Activated CD8-positive, alpha-beta T cell treated with anti-CD3 and anti-CD28 coated beads, Interleukin-2, amount 10 ng/mL, durations not matched to agents 7 days and 5 days (primary cell): ENCODE measurements at regions of chr12 and their contacts with region 1.

Region 1: DNA sequence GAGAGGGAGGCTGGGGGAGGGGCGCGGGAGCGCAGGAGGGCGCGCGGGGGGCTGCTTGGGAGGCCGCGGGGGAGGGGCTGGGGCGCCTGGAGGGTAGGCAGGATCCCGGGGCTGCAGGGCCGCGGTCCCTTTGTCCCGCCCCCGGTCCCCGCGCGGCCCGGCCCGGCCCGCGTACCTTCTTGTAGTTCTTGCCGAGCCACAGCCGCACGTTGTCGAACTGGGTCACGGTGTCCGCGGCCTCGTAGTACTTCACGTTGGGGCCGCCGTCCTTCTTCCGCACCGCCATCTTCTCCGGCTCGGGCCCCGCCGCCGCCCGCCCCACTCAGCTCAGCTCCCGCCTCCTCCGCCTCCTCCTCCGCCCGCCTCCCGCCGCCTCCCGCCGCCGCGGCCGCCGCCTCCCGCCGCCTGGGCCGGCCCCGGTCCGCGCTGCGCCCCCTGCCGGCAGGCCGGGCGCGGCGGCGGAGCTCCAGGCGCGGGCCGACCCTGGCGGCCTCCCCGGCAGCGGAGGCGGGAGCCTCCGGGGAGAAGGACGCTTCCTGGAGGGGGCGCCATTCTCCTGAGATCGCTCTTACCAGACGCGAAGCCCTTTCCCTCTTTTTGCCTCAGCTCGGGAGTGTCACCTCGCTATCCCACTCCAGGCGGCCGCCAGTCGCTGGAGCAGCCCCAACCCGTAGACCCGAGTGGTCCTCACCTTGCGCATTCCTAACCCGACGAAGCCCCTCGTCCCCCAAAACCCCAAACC is at the start of gene SMARCC2:
- DNase-seq: peak; percentile 90
- ATAC-seq: peak; percentile 90
- H3K4me3 Mint-ChIP-seq: peak within 1 kb of the TSS; percentile 93
- H3K27ac Mint-ChIP-seq: peak within 1 kb of the TSS; percentile 93
- H3K4me1 Mint-ChIP-seq: peaks cover 52% of the 10 kb centered on the region
- H3K27me3 Mint-ChIP-seq: no peaks in the 10 kb centered on the region
- total RNA-seq, gene SMARCC2: 144 to 154 TPM

Region 2: DNA sequence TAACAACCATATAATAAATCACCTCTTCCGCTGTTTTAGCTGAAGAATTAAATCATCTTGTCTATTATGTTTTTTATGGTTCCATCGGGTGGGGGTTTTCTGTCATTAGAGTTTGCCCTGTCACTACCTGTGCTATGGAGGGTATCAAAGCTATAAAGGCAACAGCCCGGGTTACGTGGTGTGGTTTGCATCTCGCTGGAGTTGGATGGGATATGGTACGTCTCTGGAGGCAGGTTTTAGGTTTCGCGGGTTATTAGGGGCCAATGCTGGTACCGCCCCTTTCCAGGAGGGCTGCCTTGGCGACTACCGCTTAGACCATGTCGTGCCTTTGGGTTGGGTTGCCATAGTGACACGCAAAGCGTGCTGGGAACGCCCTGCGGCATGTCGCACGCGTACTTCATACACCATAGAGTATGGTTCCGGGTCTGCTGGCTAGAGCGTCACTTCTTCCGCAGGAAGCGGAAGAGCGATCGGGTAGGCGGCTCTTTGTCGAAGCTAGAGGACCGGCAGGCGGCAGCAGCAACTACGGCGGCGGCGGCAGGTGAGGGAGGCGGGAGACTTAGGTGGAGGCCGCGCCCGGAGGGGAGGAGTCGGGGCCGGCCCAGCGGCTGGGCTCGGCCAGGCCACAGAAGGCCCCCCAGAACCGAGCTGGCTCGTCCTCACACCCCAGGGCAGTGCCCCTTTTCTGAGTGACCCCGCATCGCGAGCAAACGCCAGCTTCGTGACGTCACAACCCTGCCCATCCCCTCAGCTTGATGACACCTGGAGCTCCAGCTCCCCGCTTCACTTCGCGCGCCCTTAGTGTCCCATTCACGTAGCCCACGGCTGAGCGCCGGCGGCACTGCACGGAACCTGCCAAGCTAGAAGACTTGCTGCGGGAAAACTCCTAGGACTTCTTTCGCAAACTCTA is 71.3 kb before region 1 on chr12 and contains the start of gene ZC3H10:
- CTCF ChIA-PET with region 1: interaction called, 148 read pairs
- POLR2A ChIA-PET with region 1: interaction called, 36 read pairs
- DNase-seq: peak; percentile 100
- ATAC-seq: peak; percentile 76
- H3K4me3 Mint-ChIP-seq: peak within 1 kb of the TSS; percentile 100
- H3K27ac Mint-ChIP-seq: peak within 1 kb of the TSS; percentile 100
- H3K4me1 Mint-ChIP-seq: peaks cover 39% of the 10 kb centered on the region
- H3K27me3 Mint-ChIP-seq: no peaks in the 10 kb centered on the region
- total RNA-seq, gene ZC3H10: 9.1 to 10.6 TPM

Region 3: DNA sequence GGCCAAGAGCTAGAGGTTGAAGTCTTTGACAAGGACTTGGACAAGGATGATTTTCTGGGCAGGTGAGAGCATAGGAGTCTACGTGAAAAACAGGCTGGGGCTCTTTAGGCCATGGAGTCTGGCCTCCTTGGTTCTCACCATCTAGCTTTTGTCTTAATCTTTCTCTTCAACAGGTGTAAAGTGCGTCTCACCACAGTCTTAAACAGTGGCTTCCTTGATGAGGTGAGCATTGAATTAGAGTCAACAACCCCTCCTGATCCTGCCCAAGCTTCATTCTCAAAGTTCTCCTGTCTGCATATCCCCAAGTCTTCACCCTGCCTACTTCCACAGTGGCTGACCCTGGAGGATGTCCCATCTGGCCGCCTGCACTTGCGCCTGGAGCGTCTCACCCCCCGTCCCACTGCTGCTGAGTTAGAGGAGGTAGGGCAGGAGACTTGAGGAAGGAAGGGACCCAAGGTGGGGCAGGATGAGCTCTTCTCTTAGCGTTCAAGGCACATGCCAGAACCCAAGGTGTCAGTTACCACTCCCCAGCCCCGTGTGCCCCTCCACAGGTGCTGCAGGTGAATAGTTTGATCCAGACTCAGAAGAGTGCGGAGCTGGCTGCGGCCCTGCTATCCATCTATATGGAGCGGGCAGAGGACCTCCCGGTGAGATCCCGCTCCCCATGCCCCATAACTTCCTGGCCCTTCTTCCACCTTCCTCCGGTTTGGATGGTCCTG is 51.3 kb before region 1 on chr12:
- CTCF ChIA-PET with region 1: interaction called, 13 read pairs
- POLR2A ChIA-PET with region 1: interaction called, 3 read pairs
- DNase-seq: no peak
- ATAC-seq: peak; percentile 14
- H3K4me3 Mint-ChIP-seq: no peak overlapping the region
- H3K27ac Mint-ChIP-seq: peak overlapping the region; percentile 83
- H3K4me1 Mint-ChIP-seq: peaks cover 71% of the 10 kb centered on the region
- H3K27me3 Mint-ChIP-seq: no peaks in the 10 kb centered on the region

Region 4: DNA sequence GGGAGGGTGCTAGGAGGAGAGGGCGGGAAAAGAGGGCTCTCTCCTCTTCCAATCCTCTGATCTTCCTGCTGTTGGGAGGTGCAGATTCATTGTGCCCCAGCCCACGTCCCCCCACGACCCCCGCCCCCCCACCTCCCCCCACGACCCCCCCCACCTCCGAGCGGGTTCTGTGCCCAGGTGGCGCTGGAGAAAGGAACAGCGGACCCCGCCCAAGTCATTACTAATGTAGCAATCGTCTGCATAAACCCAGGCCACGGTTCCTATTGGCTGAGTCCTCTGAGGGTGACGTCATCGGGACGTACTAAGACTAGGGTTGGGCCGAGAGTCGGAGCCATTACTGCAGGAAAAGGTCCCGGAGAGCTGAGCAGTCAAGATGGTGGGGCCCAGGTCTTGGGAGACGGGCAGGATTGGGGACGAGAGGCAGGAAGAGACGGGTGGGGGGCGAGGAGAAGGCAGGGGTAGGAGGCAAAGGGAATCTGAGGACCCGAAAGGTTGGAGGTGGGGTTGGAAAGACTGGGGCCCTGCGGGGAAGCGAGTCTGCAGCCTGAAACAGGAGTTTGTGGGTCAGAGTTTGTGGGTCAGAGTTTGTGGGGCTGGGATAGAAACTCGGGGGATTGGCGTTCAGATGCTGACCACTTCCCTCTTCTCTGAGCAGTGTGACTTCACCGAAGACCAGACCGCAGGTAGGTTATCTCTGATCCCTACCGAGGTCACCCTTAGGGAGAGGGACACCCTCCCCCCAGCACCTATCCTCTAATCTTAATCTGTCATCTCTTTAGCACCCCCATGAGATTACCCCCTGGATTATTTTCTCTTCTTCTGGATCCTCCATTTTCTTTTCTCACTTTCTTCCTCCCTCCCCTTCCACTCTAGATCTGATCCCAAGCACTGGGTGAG is 31.1 kb before region 1 on chr12 and contains the start of gene MYL6:
- CTCF ChIA-PET with region 1: interaction called, 74 read pairs
- POLR2A ChIA-PET with region 1: interaction called, 50 read pairs
- DNase-seq: peak; percentile 97
- ATAC-seq: peak; percentile 83
- H3K4me3 Mint-ChIP-seq: peak within 1 kb of the TSS; percentile 90
- H3K27ac Mint-ChIP-seq: peak within 1 kb of the TSS; percentile 96
- H3K4me1 Mint-ChIP-seq: peaks cover 61% of the 10 kb centered on the region
- H3K27me3 Mint-ChIP-seq: no peaks in the 10 kb centered on the region
- total RNA-seq, gene MYL6: 1,527 to 1,542 TPM

Region 5: DNA sequence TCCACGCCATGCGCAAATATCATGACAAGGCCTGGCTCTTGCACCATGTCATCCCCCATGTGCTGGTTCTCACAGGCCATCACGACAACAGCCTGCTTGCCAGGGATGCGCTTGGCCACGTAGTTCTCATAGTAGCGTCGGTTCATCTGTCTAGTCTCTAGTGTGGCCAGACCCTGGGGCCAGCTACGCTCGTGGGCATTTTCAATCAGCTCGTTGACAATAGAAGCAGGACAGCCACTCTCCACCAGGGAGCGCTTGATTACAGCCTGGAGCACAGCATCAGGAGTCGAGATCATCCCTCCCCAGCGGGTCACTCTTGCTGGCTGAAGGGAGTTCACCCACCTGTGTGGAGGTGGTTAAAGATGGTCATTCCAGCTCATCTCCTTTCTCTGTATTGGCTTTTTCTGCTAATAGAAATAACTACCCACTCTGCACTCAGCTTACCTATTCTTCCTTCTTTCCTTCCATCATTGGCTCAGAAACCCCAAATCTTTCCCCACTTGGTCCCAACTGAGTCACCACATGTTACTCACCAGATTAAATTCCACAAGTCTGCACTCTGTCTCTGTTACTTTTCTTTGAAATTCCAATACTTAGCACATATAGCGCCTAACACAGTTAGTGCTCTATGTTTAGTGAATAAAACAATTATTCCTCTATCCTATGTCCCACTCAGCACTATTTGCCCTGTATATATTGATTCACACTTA is 17.3 kb after region 1 on chr12:
- CTCF ChIA-PET with region 1: interaction called, 19 read pairs
- POLR2A ChIA-PET with region 1: interaction called, 3 read pairs
- DNase-seq: peak; percentile 56
- ATAC-seq: peak; percentile 62
- H3K4me3 Mint-ChIP-seq: no peak overlapping the region
- H3K27ac Mint-ChIP-seq: no peak overlapping the region
- H3K4me1 Mint-ChIP-seq: no peaks in the 10 kb centered on the region
- H3K27me3 Mint-ChIP-seq: no peaks in the 10 kb centered on the region

Region 6: DNA sequence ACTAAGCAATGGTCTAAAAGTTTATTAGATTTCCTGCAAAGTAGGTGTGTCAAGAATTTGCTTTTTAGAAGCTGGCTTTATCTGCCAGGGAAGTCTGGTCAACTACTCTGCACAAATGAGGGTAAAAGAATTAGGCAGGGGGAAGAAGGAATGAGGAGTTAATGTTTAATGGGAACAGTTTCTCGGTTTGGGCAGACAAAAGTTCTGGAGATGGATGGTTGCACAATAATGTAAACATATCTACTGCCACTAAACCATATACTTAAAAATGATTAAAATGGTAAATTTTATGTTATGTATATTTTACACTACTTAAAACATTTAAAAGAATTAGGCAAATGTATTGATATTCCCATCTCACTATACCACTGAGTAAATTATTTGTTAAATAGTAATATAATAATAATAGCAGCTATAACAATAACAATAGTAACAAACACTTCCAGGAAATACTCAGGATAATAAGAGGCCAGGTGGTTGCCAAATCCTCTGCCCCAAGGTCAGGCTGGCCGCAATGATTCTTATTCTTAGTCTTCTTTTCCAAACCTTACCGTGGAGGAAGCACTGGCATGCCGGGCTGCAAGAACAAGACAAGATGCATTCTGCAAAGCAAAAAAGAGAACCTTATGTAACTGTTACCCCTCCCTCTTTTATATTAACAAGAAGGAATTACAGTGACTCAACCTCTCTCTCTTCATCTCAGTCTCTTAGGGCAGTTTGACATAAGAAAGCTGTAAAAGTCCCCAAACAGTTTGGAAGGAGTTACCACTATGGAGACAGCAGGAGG is 96.9 kb after region 1 on chr12:
- CTCF ChIA-PET with region 1: interaction called, 18 read pairs
- POLR2A ChIA-PET with region 1: no interaction called
- DNase-seq: no peak
- ATAC-seq: no peak
- H3K4me3 Mint-ChIP-seq: no peak overlapping the region
- H3K27ac Mint-ChIP-seq: no peak overlapping the region
- H3K4me1 Mint-ChIP-seq: peaks cover 20% of the 10 kb centered on the region
- H3K27me3 Mint-ChIP-seq: no peaks in the 10 kb centered on the region

Region 7: DNA sequence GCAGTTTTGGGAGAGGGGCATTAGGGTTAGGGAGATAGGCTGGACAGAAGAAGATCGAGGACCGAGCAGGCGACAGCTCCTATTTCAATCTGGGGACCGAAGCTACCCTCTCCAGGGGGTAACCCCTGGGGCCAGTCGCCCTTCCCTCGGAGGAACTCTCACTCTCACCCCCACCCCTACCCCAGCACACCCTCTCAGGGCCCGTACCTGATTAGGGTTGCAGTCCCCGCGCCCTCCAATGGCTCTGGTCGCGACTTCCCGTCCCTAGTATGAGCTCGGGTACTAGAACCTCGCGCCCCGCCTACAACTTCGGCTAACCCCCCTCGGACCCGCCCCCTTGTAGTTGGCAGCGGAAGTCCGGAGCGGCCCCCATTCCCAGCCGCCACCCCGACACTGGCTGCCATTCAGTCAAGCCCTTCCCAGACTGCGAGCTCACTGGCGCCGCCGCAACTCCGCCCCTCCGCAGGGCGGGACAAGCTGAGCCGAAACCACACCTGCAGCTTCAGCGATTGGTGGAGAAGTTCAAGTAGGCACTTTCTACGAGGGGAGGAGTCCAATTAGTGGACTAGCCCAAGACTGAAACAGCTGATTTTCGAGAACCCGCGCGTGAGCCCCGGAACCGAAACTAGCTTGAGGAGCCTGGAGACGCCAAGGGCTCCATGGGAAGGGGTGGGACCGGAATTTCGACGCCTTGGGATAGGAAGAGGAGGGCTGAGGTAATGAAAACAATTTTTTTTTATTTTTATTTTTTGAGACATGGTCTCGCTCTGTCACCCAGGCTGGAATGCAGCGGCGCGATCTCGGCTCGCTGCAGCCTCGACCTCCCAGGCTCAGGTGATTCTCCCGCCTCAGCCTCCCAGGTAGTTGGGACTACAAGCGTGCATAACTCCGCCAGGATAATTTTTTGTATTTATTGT is 170.8 kb after region 1 on chr12 and contains the start of gene STAT2:
- CTCF ChIA-PET with region 1: interaction called, 16 read pairs
- POLR2A ChIA-PET with region 1: interaction called, 4 read pairs
- DNase-seq: peak; percentile 100
- ATAC-seq: peak; percentile 98
- H3K4me3 Mint-ChIP-seq: peak within 1 kb of the TSS; percentile 93
- H3K27ac Mint-ChIP-seq: peak within 1 kb of the TSS; percentile 97
- H3K4me1 Mint-ChIP-seq: peaks cover 25% of the 10 kb centered on the region
- H3K27me3 Mint-ChIP-seq: no peaks in the 10 kb centered on the region
- total RNA-seq, gene STAT2: 193 to 194 TPM

Region 8: GRCh38 chr12:56377310-56377988 is 188.1 kb after region 1 on chr12:
- CTCF ChIA-PET with region 1: no interaction called
- POLR2A ChIA-PET with region 1: no interaction called
- DNase-seq: no peak
- ATAC-seq: no peak
- H3K4me3 Mint-ChIP-seq: no peak overlapping the region
- H3K27ac Mint-ChIP-seq: no peak overlapping the region
- H3K4me1 Mint-ChIP-seq: no peaks in the 10 kb centered on the region
- H3K27me3 Mint-ChIP-seq: peaks cover 3% of the 10 kb centered on the region